ENCODE measurements at regions of chr15 and their contacts with region 1.

Region 1: DNA sequence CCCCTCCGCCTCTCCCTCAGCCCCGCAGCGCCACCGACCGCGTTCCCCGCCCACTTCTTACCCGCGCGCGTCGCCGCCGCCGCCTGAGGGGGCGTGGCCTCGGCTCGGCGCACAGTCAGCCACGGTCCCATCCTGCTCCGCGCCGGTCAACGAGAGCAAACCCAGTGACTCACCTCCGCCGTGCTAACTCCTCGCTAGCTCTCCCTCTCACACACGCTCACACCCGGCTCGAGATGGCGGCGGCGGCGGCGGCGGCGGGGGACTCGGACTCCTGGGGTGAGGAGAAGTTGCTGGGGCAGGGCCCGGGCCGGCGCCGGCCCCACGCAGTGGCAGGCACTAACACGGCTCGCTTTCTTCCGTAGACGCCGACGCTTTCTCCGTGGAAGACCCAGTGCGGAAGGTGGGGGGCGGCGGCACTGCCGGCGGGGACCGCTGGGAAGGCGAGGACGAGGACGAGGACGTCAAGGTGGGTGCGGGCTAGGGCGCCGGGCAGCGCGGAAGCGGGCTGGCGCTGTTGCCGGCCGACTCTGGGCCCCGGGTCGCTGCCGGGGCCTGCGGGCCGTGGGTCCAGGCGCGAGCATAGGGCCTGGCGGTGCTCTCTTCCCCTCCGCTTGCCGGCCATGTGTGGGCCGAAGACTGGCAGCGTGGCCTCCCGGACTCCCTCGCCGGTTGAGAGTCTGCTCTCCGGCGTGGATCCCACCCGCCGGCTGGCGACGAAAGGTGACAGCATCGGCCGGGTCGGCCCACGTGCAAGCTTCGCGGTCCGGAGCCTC is at the start of gene EIF3J:
- DNase-seq: peak; percentile 86 to 98 (median 95)

Region 2: DNA sequence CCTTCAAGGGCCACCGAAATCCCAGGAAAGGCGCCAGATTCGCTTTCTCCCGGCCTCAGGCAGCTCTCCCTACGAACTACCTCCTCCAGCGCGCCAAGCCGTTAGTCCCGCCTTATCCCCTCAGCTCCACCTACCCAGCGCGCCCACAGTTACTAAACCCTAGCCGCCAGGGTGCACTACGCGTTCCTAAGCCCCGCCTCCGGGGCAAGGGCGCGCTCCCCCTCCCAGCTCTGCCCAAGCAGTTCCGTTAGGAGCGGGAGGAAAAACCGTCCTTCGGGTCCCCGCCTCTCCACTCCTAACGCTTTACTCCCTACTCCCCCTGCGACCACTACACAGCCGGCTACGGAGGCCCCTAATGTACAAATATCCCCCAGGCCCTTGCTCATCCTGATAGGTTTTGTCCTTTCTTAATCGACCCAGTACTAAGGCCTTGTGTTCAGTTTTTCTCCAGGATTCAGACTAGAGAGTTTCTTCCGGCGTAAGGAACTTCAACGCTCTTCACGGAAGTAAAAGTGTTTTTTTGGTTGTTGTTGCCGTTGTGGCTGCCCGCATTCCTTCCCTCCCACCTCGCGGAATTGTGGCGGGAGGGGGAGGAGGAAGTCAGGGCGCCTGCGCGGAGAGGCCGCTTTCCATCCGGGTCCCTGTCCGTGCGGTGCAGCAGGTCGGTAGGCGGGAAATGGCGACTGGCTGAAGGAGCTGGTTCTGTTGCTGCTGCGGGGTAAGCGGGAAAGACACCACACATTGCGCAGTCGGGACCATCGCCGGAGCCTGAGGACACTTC is 110.0 kb before region 1 on chr15 and contains the start of gene CTDSPL2:
- intact Hi-C with region 1: loop called (anchors 1 kb)
- DNase-seq: peak; percentile 94 to 99 (median 98)

Region 3: DNA sequence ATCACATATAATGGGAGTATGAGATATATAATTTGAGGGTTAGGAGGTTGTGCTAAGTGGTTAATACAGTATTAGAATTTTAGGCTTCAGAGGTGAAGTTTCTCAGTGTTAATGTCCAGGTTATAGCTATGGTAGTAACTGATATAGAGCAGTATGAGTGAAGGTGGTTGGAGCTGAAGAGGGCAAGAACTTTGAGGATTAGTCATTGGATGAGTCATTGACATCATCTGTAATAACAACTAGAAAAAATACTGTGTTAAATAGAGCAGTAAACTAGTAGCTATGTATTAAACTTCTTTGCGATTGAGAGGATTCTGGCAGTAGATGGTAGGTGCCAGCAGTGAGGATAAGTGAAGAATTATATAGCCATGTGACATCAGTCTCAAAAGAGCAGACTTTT is 47.7 kb before region 1 on chr15:
- intact Hi-C with region 1: no loop called
- DNase-seq: no peak

Region 4: GRCh38 chr15:44698641-44699040 is 161.5 kb after region 1 on chr15:
- intact Hi-C with region 1: no loop called
- DNase-seq: no peak